ENCODE measurements at regions of chr12 and their contacts with region 1.

Region 1: DNA sequence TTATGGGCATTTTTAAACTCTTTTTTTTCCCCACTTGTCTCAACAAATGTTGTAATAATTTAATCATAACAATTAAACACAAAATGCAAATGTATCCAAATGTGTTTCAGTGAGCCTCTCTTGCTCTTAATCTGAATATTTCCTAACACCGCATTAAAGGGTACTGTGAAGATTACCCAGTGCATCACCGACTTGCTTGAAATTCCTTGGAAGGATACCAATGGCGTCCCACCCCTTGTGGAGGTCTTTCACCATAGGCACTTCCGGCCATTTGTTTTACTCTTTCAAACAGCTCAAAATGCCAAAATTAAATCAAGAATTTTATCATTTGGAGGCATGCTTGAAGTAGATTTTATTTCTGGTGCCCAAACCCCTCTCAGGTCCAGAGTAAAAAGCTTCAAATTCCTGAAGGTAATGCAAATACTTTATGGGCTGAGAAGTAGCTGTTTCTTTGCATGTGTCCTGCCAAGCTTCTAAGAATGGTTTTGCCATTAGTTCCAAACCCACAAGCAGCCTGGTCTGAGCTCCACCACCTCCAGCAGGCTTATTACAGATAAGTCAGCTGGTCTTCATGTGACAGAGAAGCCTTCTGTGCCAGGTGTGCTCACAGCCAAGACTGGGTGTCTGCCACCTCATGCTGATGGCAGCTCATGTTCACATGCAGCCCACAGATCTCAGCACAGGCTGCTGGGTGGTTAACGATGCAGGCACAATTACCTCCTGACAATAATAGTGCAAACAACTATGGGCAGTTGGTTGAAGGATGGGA is 16.4 kb upstream of the NUDT4 start:
- DNase-seq: peak in 4 of 5 donors; percentile 60 to 86 (median 70)
- ATAC-seq: peak; percentile 96 to 98 (median 98)
- H3K4me3 ChIP-seq: no peak overlapping the region
- H3K27ac ChIP-seq: peak overlapping the region in 10 of 12 donors; percentile 1 to 78 (median 62)
- H3K4me1 ChIP-seq: peaks cover 0 to 31% (median 14%) of the 10 kb centered on the region in 12 donors
- H3K27me3 ChIP-seq: no peaks in the 10 kb centered on the region
- CTCF ChIP-seq: no peak
- POLR2A ChIP-seq: no peak

Region 2: GRCh38 chr12:93317227-93317626 is 44.1 kb before region 1 on chr12:
- intact Hi-C with region 1: loop called in 1 of 10 experiments (anchors 5 kb)
- DNase-seq: no peak
- ATAC-seq: no peak
- H3K4me3 ChIP-seq: no peak overlapping the region
- H3K27ac ChIP-seq: no peak overlapping the region
- H3K4me1 ChIP-seq: peaks cover 0 to 16% (median 0%) of the 10 kb centered on the region in 12 donors
- H3K27me3 ChIP-seq: no peaks in the 10 kb centered on the region
- CTCF ChIP-seq: no peak
- POLR2A ChIP-seq: no peak

Region 3: DNA sequence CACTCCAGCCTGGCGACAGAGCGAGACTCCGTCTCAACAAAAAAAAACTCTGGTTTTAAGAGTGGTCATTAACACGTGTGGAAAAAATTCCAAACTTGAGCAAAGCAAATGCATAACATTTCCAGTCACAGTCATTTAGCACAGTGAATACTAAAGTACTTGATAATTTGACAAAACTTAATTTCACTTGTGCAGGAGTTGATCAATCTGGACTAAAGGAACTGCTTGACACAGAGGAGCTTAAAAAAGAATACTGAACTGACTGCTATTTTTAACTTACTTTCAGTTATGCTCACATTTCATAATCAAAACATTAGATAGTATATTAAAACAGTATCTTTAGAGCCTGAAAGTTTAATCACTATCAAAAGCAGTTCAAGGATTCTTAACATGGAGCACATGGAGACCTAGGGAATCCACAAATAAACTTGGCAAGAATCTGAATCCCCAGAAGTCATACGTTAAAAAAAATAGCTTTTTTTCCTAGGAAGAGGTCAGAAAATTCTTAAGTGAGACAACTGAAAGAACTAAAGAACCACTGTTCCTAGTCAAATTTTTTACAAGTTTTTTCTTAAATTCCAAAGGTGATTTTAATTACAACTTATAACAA is 73.0 kb after region 1 on chr12:
- intact Hi-C with region 1: no loop called
- DNase-seq: no peak
- ATAC-seq: peak in 3 of 4 donors; percentile 27 to 49 (median 40)
- H3K4me3 ChIP-seq: peak overlapping the region in 9 of 12 donors; percentile 11 to 29 (median 19)
- H3K27ac ChIP-seq: peak overlapping the region; percentile 44 to 69 (median 56)
- H3K4me1 ChIP-seq: peaks cover 9 to 91% (median 62%) of the 10 kb centered on the region in 12 donors
- H3K27me3 ChIP-seq: no peaks in the 10 kb centered on the region
- CTCF ChIP-seq: no peak
- POLR2A ChIP-seq: no peak

Measured in heart left ventricle (tissue), 16 donors.